Mucosa of descending colon (tissue), 3 donors: ENCODE measurements at regions of chr16 and their contacts with region 1.

Region 1: GRCh38 chr16:17866996-17867395 is 396.2 kb upstream of the XYLT1 start:
- DNase-seq: no peak
- ATAC-seq: no peak
- H3K4me3 ChIP-seq: no peak overlapping the region
- H3K4me1 ChIP-seq: no peaks in the 10 kb centered on the region
- CTCF ChIP-seq: no peak

Region 2: GRCh38 chr16:16857603-16858313 is 1009.2 kb before region 1 on chr16:
- intact Hi-C with region 1: loop called in 1 of 2 experiments (anchors 10 kb)
- DNase-seq: no peak
- ATAC-seq: no peak
- H3K4me3 ChIP-seq: no peak overlapping the region
- H3K4me1 ChIP-seq: no peaks in the 10 kb centered on the region
- CTCF ChIP-seq: no peak